H1 (cell line): ENCODE measurements at regions of chr16 and their contacts with region 1.

Region 1: GRCh38 chr16:5490499-5490898 is 392.9 kb upstream of the EEF2KMT start:
- DNase-seq: peak in 1 of 2 experiments; percentile 85
- H3K4me3 ChIP-seq: no peak overlapping the region
- H3K27ac ChIP-seq: no peak overlapping the region
- H3K4me1 ChIP-seq: no peaks in the 10 kb centered on the region
- H3K27me3 ChIP-seq: no peaks in the 10 kb centered on the region
- CTCF ChIP-seq: peak; percentile 88 to 93 (median 92)
- EP300 ChIP-seq: no peak
- POLR2A ChIP-seq: no peak
- RAD21 ChIP-seq: peak; percentile 89 to 93

Region 2: GRCh38 chr16:5234295-5235050 is 256.0 kb before region 1 on chr16:
- CTCF ChIA-PET with region 1: interaction called, 23 read pairs
- POLR2A ChIA-PET with region 1: no interaction called
- DNase-seq: no peak
- H3K4me3 ChIP-seq: no peak overlapping the region
- H3K27ac ChIP-seq: no peak overlapping the region
- H3K4me1 ChIP-seq: peaks cover 0 to 4% (median 2%) of the 10 kb centered on the region in 4 experiments; a peak in 4 of 7 replicates
- H3K27me3 ChIP-seq: peaks cover 0 to 3% (median 0%) of the 10 kb centered on the region in 4 experiments; a peak in 1 of 7 replicates
- CTCF ChIP-seq: no peak
- EP300 ChIP-seq: no peak
- POLR2A ChIP-seq: no peak
- RAD21 ChIP-seq: no peak; a peak in 1 of 4 replicates

Region 3: GRCh38 chr16:5412728-5413127 is 77.8 kb before region 1 on chr16:
- CTCF ChIA-PET with region 1: interaction called, 115 read pairs
- POLR2A ChIA-PET with region 1: no interaction called
- DNase-seq: peak in 1 of 2 experiments; percentile 70
- H3K4me3 ChIP-seq: no peak overlapping the region
- H3K27ac ChIP-seq: no peak overlapping the region
- H3K4me1 ChIP-seq: peaks cover 0 to 6% (median under 1%) of the 10 kb centered on the region in 4 experiments; a peak in 2 of 7 replicates
- H3K27me3 ChIP-seq: no peaks in the 10 kb centered on the region
- CTCF ChIP-seq: peak; percentile 76 to 82 (median 78)
- EP300 ChIP-seq: no peak
- POLR2A ChIP-seq: no peak
- RAD21 ChIP-seq: peak; percentile 85 to 91

Region 4: GRCh38 chr16:5450409-5451104 is 39.9 kb before region 1 on chr16:
- CTCF ChIA-PET with region 1: interaction called, 22 read pairs
- POLR2A ChIA-PET with region 1: no interaction called
- DNase-seq: peak; percentile 62 to 64
- H3K4me3 ChIP-seq: peak overlapping the region in 2 of 4 experiments; percentile 20 to 30; a peak in 4 of 8 replicates
- H3K27ac ChIP-seq: peak overlapping the region; percentile 67; the same call in 1 of the 2 replicates
- H3K4me1 ChIP-seq: peaks cover 20 to 26% (median 21%) of the 10 kb centered on the region in 4 experiments
- H3K27me3 ChIP-seq: no peaks in the 10 kb centered on the region; a peak in 1 of 7 replicates
- CTCF ChIP-seq: no peak
- EP300 ChIP-seq: no peak
- POLR2A ChIP-seq: no peak; a peak in 2 of 3 replicates
- RAD21 ChIP-seq: no peak

Region 5: DNA sequence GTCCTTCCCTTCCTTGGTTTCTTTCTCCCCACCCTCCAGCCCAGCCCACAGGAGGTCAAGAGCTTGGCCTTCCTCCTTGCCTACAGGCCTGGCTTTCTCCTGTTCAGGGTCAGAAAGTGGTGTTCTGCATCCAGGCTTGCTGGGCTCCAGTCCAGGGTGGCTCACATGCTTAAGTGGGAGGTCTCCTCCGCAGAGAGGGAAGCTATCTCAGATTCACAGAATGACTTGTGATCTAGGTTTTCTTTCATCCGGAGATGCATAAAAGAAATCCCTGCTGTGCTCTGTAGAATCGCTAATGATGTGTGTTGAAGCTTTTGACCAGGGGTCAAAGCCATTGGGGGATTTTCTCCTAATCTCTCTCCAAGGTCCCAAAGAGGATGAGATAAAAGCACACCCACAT is 10.6 kb before region 1 on chr16:
- CTCF ChIA-PET with region 1: interaction called, 76 read pairs
- POLR2A ChIA-PET with region 1: no interaction called
- DNase-seq: no peak
- H3K4me3 ChIP-seq: no peak overlapping the region
- H3K27ac ChIP-seq: no peak overlapping the region
- H3K4me1 ChIP-seq: peaks cover 3 to 9% (median 5%) of the 10 kb centered on the region in 4 experiments; a peak in 5 of 7 replicates
- H3K27me3 ChIP-seq: no peaks in the 10 kb centered on the region
- CTCF ChIP-seq: no peak
- EP300 ChIP-seq: no peak
- POLR2A ChIP-seq: no peak
- RAD21 ChIP-seq: no peak

Region 6: GRCh38 chr16:5509793-5510192 is 19.3 kb after region 1 on chr16:
- CTCF ChIA-PET with region 1: interaction called, 20 read pairs
- POLR2A ChIA-PET with region 1: no interaction called
- DNase-seq: no peak
- H3K4me3 ChIP-seq: no peak overlapping the region
- H3K27ac ChIP-seq: no peak overlapping the region
- H3K4me1 ChIP-seq: peaks cover 0 to 5% (median 3%) of the 10 kb centered on the region in 4 experiments; a peak in 3 of 7 replicates
- H3K27me3 ChIP-seq: no peaks in the 10 kb centered on the region
- CTCF ChIP-seq: no peak
- EP300 ChIP-seq: no peak
- POLR2A ChIP-seq: no peak
- RAD21 ChIP-seq: no peak

Region 7: GRCh38 chr16:5567545-5567944 is 77.0 kb after region 1 on chr16:
- CTCF ChIA-PET with region 1: no interaction called
- POLR2A ChIA-PET with region 1: no interaction called
- DNase-seq: no peak
- H3K4me3 ChIP-seq: no peak overlapping the region
- H3K27ac ChIP-seq: no peak overlapping the region
- H3K4me1 ChIP-seq: no peaks in the 10 kb centered on the region
- H3K27me3 ChIP-seq: no peaks in the 10 kb centered on the region
- CTCF ChIP-seq: no peak
- EP300 ChIP-seq: no peak
- POLR2A ChIP-seq: no peak
- RAD21 ChIP-seq: no peak